ENCODE measurements at regions of chr6 and their contacts with region 1.

Region 1: GRCh38 chr6:5764401-5764955 is 242.2 kb downstream of the NRN1 start:
- DNase-seq: peak; percentile 67
- ATAC-seq: peak; percentile 87 to 89

Region 2: GRCh38 chr6:5626727-5627426 is 137.6 kb before region 1 on chr6:
- intact Hi-C with region 1: loop called in 1 of 2 experiments (anchors 10 kb)
- DNase-seq: no peak
- ATAC-seq: no peak

Region 3: DNA sequence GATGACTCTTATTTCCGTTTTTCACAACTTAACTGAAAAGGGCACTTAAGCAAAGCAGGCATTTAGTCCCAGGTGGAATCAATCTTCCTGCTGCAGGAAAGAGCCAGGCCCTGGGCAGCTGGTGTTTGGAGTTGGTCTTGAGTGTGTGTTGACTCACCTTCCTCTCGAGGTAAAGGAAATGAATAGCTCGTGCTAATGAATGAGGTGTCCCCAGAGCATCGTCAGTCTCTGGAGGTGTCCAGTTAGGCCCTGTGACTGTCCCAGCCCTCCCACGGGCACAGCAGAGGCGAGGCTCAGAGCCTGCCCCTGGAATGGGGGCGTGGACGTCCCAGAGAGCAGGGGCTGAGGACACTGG is 35.4 kb before region 1 on chr6:
- intact Hi-C with region 1: no loop called
- DNase-seq: no peak
- ATAC-seq: no peak

Region 4: GRCh38 chr6:5941188-5941587 is 176.7 kb after region 1 on chr6:
- intact Hi-C with region 1: no loop called
- DNase-seq: no peak
- ATAC-seq: peak; percentile 34 to 96

Measured in left cardiac atrium (tissue), 4 donors.